ENCODE measurements at regions of chr9 and their contacts with region 1.

Region 1: GRCh38 chr9:133023117-133023890 is 7.5 kb upstream of the GTF3C5 start:
- DNase-seq: peak in 4 of 5 donors; percentile 7 to 58 (median 14)
- H3K4me3 ChIP-seq: no peak overlapping the region
- H3K4me3 Mint-ChIP-seq: peak overlapping the region in 1 of 8 donors; percentile 54
- H3K27ac ChIP-seq: no peak overlapping the region
- H3K27ac Mint-ChIP-seq: peak overlapping the region in 2 of 7 donors; percentile 3 to 17
- H3K4me1 ChIP-seq: peaks cover 15% of the 10 kb centered on the region
- H3K4me1 Mint-ChIP-seq: peaks cover 4 to 22% (median 16%) of the 10 kb centered on the region in 4 donors
- H3K27me3 ChIP-seq: no peaks in the 10 kb centered on the region
- H3K27me3 Mint-ChIP-seq: peaks cover 1 to 3% of the 10 kb centered on the region in 2 donors

Region 2: GRCh38 chr9:132447346-132447745 is 576.0 kb before region 1 on chr9:
- CTCF ChIA-PET with region 1: no interaction called
- POLR2A ChIA-PET with region 1: no interaction called
- intact Hi-C with region 1: no loop called
- DNase-seq: no peak
- H3K4me3 ChIP-seq: no peak overlapping the region
- H3K4me3 Mint-ChIP-seq: no peak overlapping the region
- H3K27ac ChIP-seq: no peak overlapping the region
- H3K27ac Mint-ChIP-seq: no peak overlapping the region
- H3K4me1 ChIP-seq: no peaks in the 10 kb centered on the region
- H3K4me1 Mint-ChIP-seq: peaks cover 4 to 7% (median 5%) of the 10 kb centered on the region in 4 donors
- H3K27me3 ChIP-seq: no peaks in the 10 kb centered on the region
- H3K27me3 Mint-ChIP-seq: peaks cover 24 to 32% of the 10 kb centered on the region in 2 donors

Region 3: GRCh38 chr9:132622159-132622558 is 401.1 kb before region 1 on chr9:
- CTCF ChIA-PET with region 1: no interaction called
- POLR2A ChIA-PET with region 1: no interaction called
- intact Hi-C with region 1: no loop called
- DNase-seq: no peak
- H3K4me3 ChIP-seq: no peak overlapping the region
- H3K4me3 Mint-ChIP-seq: no peak overlapping the region
- H3K27ac ChIP-seq: no peak overlapping the region
- H3K27ac Mint-ChIP-seq: no peak overlapping the region
- H3K4me1 ChIP-seq: no peaks in the 10 kb centered on the region
- H3K4me1 Mint-ChIP-seq: no peaks in the 10 kb centered on the region
- H3K27me3 ChIP-seq: no peaks in the 10 kb centered on the region
- H3K27me3 Mint-ChIP-seq: no peaks in the 10 kb centered on the region

Region 4: GRCh38 chr9:133009906-133010582 is 13.3 kb before region 1 on chr9:
- CTCF ChIA-PET with region 1: interaction called, 13 read pairs
- POLR2A ChIA-PET with region 1: no interaction called
- intact Hi-C with region 1: no loop called
- DNase-seq: no peak
- H3K4me3 ChIP-seq: no peak overlapping the region
- H3K4me3 Mint-ChIP-seq: no peak overlapping the region
- H3K27ac ChIP-seq: no peak overlapping the region
- H3K27ac Mint-ChIP-seq: no peak overlapping the region
- H3K4me1 ChIP-seq: no peaks in the 10 kb centered on the region
- H3K4me1 Mint-ChIP-seq: no peaks in the 10 kb centered on the region
- H3K27me3 ChIP-seq: no peaks in the 10 kb centered on the region
- H3K27me3 Mint-ChIP-seq: peaks cover 20 to 33% of the 10 kb centered on the region in 2 donors

Region 5: DNA sequence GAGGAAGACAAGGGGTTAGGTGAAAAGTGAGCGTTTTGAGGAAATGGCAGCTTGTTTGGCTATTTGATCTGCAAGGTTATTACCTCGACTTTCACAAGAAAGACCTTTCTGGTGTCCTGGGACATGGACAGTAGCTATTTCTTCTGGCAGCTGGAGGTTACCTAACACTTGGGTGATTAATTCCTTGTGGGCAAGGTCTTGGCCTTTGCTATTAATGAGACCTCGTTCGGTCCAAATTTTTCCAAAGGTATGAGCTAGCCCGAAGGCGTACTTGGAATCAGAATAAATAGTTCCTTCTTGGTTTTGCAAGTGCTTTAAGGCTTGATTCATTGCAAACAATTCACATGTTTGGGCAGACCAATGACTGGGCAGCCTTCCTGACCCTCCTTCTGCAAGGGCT is 12.4 kb after region 1 on chr9:
- CTCF ChIA-PET with region 1: interaction called, 35 read pairs
- POLR2A ChIA-PET with region 1: interaction called, 8 read pairs
- intact Hi-C with region 1: no loop called
- DNase-seq: no peak
- H3K4me3 ChIP-seq: no peak overlapping the region
- H3K4me3 Mint-ChIP-seq: no peak overlapping the region
- H3K27ac ChIP-seq: no peak overlapping the region
- H3K27ac Mint-ChIP-seq: no peak overlapping the region
- H3K4me1 ChIP-seq: peaks cover 21% of the 10 kb centered on the region
- H3K4me1 Mint-ChIP-seq: peaks cover 23 to 64% (median 35%) of the 10 kb centered on the region in 4 donors
- H3K27me3 ChIP-seq: no peaks in the 10 kb centered on the region
- H3K27me3 Mint-ChIP-seq: no peaks in the 10 kb centered on the region

Region 6: DNA sequence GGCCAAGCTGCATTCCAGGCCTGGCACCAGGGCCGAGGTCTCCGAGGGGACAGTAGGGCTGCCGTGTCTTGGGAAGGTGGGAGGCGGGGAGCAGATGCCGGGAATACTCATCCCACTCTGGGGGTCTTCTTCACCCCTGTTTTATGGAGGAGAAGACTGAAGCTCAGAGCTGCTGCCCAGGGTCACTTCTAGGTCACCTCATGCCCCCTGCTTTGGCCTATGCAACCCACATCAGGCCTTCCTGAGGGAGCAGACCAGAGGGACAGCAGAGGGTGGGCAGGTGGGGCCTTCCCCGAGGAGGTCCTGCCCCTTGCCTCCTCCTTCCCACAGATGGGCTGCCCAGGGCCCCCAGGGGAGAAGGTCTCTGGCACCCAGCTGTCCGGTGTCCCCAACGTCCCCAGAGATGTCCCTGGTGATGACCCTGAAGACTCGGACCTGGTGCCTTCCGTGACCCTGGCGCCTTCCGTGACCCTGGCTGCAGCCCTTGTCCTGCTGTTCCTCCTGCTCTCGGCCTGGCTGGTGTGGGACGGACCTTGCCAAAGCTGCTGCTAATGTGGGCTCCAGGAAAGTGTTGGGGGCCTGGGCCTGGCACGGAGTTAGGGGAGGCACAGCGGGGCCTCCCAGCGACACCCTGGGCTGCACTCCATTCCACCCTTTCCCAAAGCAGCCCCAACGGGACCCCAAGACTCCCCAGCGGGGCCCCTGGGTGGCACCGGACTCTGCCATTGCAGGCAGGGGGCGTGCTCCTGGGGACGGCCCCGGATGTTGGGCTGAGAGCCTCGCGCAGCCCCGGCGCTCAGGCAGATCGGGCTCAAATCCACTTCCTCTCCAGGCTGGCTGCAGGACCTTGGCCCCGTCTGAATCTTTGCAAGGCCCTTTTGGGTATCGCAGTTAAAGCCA is 462.3 kb after region 1 on chr9:
- CTCF ChIA-PET with region 1: interaction called, 3 read pairs
- POLR2A ChIA-PET with region 1: no interaction called
- intact Hi-C with region 1: loop called (anchors 1 kb)
- DNase-seq: no peak
- H3K4me3 ChIP-seq: peak overlapping the region in 1 of 2 donors; percentile 6
- H3K4me3 Mint-ChIP-seq: no peak overlapping the region
- H3K27ac ChIP-seq: no peak overlapping the region
- H3K27ac Mint-ChIP-seq: no peak overlapping the region
- H3K4me1 ChIP-seq: peaks cover 5% of the 10 kb centered on the region
- H3K4me1 Mint-ChIP-seq: peaks cover 0 to 4% (median 0%) of the 10 kb centered on the region in 4 donors
- H3K27me3 ChIP-seq: no peaks in the 10 kb centered on the region
- H3K27me3 Mint-ChIP-seq: peaks cover 7 to 14% of the 10 kb centered on the region in 2 donors